Right cardiac atrium (tissue), 5 donors: ENCODE measurements at regions of chr14 and their contacts with region 1.

Region 1: DNA sequence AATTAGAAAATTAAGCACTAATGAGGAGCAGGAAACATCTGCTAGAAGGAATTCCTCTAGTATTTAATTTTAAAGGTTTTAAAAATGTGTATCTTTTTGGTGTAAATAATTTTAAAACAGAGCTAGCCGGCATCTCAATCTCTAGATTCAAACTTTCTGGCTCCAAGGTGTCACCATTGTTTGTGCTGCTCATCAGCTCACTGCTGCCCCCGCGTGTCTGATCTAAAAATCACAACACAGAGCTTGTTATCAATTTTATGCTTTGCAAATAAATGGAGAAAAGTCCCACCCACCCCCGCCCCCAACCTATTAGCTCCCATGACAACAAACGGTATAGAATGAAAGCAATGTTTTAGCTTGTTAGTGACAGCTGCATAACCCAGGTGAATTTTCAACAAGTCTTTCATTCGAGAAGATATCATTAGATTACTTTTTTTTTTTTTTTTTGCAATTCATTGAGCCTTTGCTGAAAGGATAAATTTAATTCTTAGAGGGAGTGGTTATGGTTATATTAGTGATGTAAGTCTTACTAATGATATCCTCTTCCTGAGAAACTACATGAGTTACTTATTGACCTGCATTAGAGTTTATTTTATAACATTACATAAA is 11.3 kb upstream of the ABHD12B start:
- DNase-seq: peak; percentile 78 to 91 (median 89)
- ATAC-seq: peak; percentile 65 to 77
- H3K4me3 ChIP-seq: peak overlapping the region; percentile 77
- H3K27ac ChIP-seq: no peak overlapping the region
- H3K4me1 ChIP-seq: no peaks in the 10 kb centered on the region
- H3K27me3 ChIP-seq: no peaks in the 10 kb centered on the region

Region 2: DNA sequence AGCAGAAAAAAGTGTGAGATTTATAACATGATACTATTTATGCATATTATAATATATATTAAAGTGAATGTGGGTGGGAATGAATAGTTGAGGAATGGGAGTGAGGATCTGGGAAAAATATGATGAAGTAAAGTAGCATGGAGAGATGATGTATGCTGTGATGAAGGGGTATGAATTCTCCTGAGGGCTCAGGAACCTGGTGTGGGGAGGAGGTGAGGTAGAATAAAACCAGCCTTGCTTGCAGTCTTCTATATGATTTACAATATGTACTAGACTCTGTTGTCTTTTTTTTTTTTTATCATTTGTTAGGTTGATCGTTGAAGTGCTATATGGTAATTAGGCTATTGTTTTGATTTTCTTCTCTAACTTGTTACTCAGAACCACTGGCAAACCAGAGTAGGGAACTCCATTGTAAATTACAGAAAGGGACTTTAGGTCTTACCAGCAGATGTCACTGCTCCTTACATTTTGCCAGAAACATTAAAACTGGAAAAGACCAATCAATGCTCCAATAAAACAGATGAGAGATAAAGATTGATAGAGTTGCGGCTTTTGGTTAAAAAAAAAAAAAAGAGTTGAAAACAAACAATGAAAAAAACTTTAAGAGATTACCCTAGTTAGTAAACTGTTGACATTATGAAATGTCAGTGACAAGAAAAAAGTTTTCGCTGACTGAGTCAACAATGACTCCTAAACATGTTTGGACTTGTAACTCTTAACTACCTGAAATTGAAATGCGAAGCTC is 260.7 kb before region 1 on chr14:
- intact Hi-C with region 1: loop called in 1 of 4 experiments (anchors 10 kb)
- DNase-seq: no peak
- ATAC-seq: peak in 1 of 2 donors; percentile 51
- H3K4me3 ChIP-seq: no peak overlapping the region
- H3K27ac ChIP-seq: no peak overlapping the region
- H3K4me1 ChIP-seq: no peaks in the 10 kb centered on the region
- H3K27me3 ChIP-seq: no peaks in the 10 kb centered on the region

Region 3: DNA sequence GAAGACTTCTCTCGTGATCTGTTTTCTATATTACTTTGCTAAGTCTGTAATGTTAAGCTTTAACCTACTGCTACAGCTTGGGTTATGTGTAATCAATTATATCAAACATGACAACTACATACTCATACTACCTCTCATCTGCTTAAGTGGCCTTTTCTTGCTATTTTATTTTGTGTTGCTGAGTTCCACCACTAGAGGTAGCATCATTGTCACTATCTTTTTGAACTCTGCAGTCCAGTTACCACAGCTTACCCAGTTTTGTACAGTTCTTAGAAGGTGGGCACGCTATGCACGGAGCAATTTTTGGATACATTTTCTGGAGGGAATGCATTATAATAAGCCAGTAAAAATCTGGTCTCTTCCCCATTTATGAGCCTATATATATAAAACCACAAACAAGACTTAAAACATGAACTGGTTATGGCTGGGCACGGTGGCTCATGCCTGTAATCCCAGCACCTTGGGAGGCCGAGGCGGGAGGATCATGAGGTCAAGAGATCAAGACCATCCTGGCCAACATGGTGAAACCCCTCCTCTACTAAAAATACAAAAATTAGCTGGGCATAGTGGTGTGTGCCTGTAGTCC is 240.9 kb before region 1 on chr14:
- intact Hi-C with region 1: loop called in 1 of 4 experiments (anchors 10 kb)
- DNase-seq: no peak
- ATAC-seq: peak; percentile 34 to 45
- H3K4me3 ChIP-seq: no peak overlapping the region
- H3K27ac ChIP-seq: no peak overlapping the region
- H3K4me1 ChIP-seq: no peaks in the 10 kb centered on the region
- H3K27me3 ChIP-seq: no peaks in the 10 kb centered on the region

Region 4: GRCh38 chr14:50773632-50774541 is 86.7 kb before region 1 on chr14:
- intact Hi-C with region 1: loop called in 1 of 4 experiments (anchors 10 kb)
- DNase-seq: no peak
- ATAC-seq: peak; percentile 60 to 62
- H3K4me3 ChIP-seq: no peak overlapping the region
- H3K27ac ChIP-seq: no peak overlapping the region
- H3K4me1 ChIP-seq: peaks cover 1% of the 10 kb centered on the region
- H3K27me3 ChIP-seq: no peaks in the 10 kb centered on the region

Region 5: GRCh38 chr14:50784683-50785456 is 75.7 kb before region 1 on chr14:
- intact Hi-C with region 1: loop called in 1 of 4 experiments (anchors 5 kb)
- DNase-seq: no peak
- ATAC-seq: peak; percentile 52
- H3K4me3 ChIP-seq: no peak overlapping the region
- H3K27ac ChIP-seq: peak overlapping the region; percentile 21
- H3K4me1 ChIP-seq: peaks cover 8% of the 10 kb centered on the region
- H3K27me3 ChIP-seq: no peaks in the 10 kb centered on the region

Region 6: DNA sequence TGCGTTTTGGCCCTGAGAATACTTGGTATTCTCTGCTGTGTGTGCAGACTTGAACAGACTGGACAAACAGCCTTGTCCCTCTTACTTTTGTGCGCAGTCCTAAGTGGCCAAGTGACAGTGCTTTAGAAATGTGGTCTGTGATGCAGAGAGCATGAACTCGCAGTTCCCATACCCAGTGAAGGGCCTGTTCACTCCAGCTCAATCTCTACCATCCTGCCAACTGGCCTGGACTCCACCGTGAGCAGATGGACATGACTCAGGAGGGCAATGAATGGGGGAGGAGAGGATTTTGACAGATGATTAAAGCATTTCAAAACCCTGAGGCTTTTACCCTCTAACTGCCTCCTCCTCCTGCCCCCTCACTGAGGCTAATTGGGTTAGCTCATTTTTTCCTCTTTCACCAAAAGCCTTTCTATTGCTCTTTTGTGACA is 146.2 kb after region 1 on chr14:
- intact Hi-C with region 1: no loop called
- DNase-seq: peak in 1 of 3 donors; percentile 41
- ATAC-seq: peak; percentile 70 to 79
- H3K4me3 ChIP-seq: no peak overlapping the region
- H3K27ac ChIP-seq: peak overlapping the region; percentile 13
- H3K4me1 ChIP-seq: no peaks in the 10 kb centered on the region
- H3K27me3 ChIP-seq: no peaks in the 10 kb centered on the region